ENCODE measurements at regions of chr12 and their contacts with region 1.

Region 1: DNA sequence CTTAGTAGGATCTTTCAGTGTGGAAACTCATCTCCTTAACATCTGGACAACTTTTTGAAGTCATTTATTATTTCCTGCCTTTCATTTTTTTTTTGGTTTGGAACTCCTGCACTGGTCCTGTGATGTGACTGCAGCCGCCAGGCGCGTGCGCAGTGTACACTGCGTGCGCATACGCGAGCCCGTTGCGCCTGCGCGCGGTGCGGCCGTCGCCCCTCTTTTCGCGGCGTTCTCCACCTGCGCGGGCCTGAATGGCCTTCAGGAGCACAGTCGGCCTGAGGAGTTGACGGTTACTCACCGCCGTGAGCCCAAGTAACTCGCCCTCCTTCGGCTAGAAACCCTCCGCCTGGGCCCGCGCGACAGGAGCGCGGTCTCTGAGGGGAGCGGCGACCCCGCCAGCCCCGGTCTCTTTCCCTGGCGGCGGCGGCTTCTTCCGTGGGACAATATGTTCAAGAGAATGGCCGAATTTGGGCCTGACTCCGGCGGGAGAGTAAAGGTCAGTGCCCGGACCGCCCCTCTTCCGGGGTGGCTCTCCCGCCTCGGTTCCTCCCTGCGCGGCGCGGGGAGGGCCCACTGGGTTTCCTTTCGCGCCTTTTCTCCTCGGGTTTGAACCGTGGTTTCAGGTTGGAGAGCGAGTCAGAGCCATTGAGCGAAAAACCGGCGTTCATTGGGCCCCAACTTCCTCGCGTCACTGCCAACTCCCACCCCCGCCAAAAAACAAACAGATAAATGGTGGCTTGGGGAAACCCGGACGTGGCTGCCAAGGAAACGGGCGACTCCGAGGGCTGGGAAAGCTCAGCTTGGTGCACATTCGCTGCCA is at the start of gene YEATS4:
- DNase-seq: peak; percentile 59 to 93 (median 83)
- ATAC-seq: peak; percentile 85 to 90 (median 90)
- H3K4me3 ChIP-seq: peak within 1 kb of the TSS; percentile 64 to 97
- H3K4me3 Mint-ChIP-seq: peak within 1 kb of the TSS; percentile 82 to 89 (median 88)
- H3K27ac ChIP-seq: peak within 1 kb of the TSS; percentile 99
- H3K27ac Mint-ChIP-seq: peak within 1 kb of the TSS; percentile 82 to 87
- H3K4me1 ChIP-seq: peaks cover 8 to 25% of the 10 kb centered on the region in 2 experiments
- H3K4me1 Mint-ChIP-seq: peaks cover 26 to 38% (median 27%) of the 10 kb centered on the region in 3 donors
- H3K27me3 ChIP-seq: no peaks in the 10 kb centered on the region
- H3K27me3 Mint-ChIP-seq: peaks cover under 1% of the 10 kb centered on the region in 2 donors
- total RNA-seq, gene YEATS4: 16.3 to 29.6 (median 21.5) TPM

Region 2: DNA sequence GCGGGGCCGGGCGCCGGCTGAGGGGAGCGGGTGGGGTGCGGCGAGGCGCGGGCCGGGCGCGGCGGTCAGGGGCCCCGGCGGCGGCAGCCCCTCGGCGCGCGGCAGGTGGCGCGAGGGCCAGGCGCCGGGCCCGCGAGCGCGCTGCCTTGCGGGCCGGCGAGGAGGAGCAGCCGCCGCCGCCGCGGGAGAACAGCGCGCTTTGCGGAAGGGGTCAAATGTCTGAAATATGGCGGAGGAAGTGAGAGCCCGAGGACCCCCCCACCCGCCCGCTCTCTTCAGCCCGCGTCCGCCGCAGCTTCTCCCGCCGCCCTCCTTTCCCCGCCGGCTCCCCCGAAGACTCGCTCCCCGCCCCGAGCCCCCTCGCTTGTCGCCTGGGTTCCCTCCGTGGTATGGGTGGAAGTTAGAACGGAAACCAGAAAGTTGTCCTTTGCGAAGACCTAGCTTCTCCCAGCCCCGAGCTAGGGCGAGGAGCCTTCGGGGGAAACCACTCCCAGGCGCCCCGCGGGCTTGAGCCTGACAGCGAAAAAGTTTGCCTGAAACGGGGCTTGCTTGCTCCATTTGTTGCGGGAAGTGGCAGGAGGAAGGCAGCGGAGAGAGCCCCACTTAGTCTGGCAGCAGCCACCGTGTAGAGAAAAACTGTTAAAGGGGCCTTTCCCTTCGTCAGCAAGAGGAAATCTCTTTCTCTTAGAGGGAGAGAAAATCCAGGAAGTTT is 748.5 kb before region 1 on chr12:
- CTCF ChIA-PET with region 1: interaction called in 1 of 2 experiments, 12 read pairs
- POLR2A ChIA-PET with region 1: no interaction called
- DNase-seq: peak in 34 of 35 experiments; percentile 18 to 66 (median 34)
- ATAC-seq: peak; percentile 15 to 50 (median 42)
- H3K4me3 ChIP-seq: peak overlapping the region; percentile 97 to 99
- H3K4me3 Mint-ChIP-seq: peak overlapping the region; percentile 94 to 100 (median 96)
- H3K27ac ChIP-seq: peak overlapping the region; percentile 92
- H3K27ac Mint-ChIP-seq: peak overlapping the region; percentile 95 to 97
- H3K4me1 ChIP-seq: peaks cover 19 to 27% of the 10 kb centered on the region in 2 experiments
- H3K4me1 Mint-ChIP-seq: peaks cover 43 to 58% (median 49%) of the 10 kb centered on the region in 3 donors
- H3K27me3 ChIP-seq: no peaks in the 10 kb centered on the region
- H3K27me3 Mint-ChIP-seq: no peaks in the 10 kb centered on the region

Region 3: GRCh38 chr12:69342421-69342820 is 17.3 kb before region 1 on chr12:
- CTCF ChIA-PET with region 1: interaction called, 3 to 12 read pairs
- POLR2A ChIA-PET with region 1: no interaction called
- DNase-seq: no peak
- ATAC-seq: no peak
- H3K4me3 ChIP-seq: no peak overlapping the region
- H3K4me3 Mint-ChIP-seq: no peak overlapping the region
- H3K27ac ChIP-seq: no peak overlapping the region
- H3K27ac Mint-ChIP-seq: no peak overlapping the region
- H3K4me1 ChIP-seq: no peaks in the 10 kb centered on the region
- H3K4me1 Mint-ChIP-seq: peaks cover 0 to 5% (median 0%) of the 10 kb centered on the region in 3 donors
- H3K27me3 ChIP-seq: peaks cover 0 to 12% of the 10 kb centered on the region in 2 experiments
- H3K27me3 Mint-ChIP-seq: peaks cover 0 to 3% of the 10 kb centered on the region in 2 donors

Region 4: DNA sequence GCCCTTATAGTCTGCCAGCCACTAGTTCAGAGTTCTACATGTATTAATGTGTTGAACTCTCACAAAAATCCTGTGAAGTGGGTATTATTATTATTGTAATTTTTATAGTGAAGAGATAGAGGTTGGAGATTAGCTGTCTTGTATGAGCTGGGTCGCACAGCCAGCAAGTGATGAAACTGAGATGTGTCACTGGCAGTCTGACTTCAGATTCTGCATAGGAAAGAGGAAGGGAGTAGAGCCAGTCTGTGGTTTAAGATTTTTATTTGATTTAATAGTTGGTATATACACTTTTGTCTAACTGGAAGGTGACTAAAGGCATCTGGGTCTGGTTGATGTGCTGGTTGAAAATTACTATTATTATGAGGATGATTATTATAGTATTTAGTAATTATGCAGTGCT is 104.7 kb after region 1 on chr12:
- CTCF ChIA-PET with region 1: no interaction called
- POLR2A ChIA-PET with region 1: no interaction called
- DNase-seq: no peak
- ATAC-seq: no peak
- H3K4me3 ChIP-seq: no peak overlapping the region
- H3K4me3 Mint-ChIP-seq: no peak overlapping the region
- H3K27ac ChIP-seq: no peak overlapping the region
- H3K27ac Mint-ChIP-seq: no peak overlapping the region
- H3K4me1 ChIP-seq: no peaks in the 10 kb centered on the region
- H3K4me1 Mint-ChIP-seq: peaks cover 0 to 7% (median 1%) of the 10 kb centered on the region in 3 donors
- H3K27me3 ChIP-seq: no peaks in the 10 kb centered on the region
- H3K27me3 Mint-ChIP-seq: peaks cover 0 to 9% of the 10 kb centered on the region in 2 donors

Region 5: GRCh38 chr12:69570545-69571399 is 211.0 kb after region 1 on chr12:
- CTCF ChIA-PET with region 1: interaction called, 80 to 94 read pairs
- POLR2A ChIA-PET with region 1: interaction called, 3 to 8 read pairs
- DNase-seq: peak in 33 of 35 experiments; percentile 6 to 86 (median 44)
- ATAC-seq: peak; percentile 54 to 87 (median 56)
- H3K4me3 ChIP-seq: no peak overlapping the region
- H3K4me3 Mint-ChIP-seq: no peak overlapping the region
- H3K27ac ChIP-seq: peak overlapping the region; percentile 54
- H3K27ac Mint-ChIP-seq: peak overlapping the region in 1 of 2 donors; percentile 31
- H3K4me1 ChIP-seq: no peaks in the 10 kb centered on the region
- H3K4me1 Mint-ChIP-seq: peaks cover 0 to 6% (median 4%) of the 10 kb centered on the region in 3 donors
- H3K27me3 ChIP-seq: no peaks in the 10 kb centered on the region
- H3K27me3 Mint-ChIP-seq: no peaks in the 10 kb centered on the region

Region 6: DNA sequence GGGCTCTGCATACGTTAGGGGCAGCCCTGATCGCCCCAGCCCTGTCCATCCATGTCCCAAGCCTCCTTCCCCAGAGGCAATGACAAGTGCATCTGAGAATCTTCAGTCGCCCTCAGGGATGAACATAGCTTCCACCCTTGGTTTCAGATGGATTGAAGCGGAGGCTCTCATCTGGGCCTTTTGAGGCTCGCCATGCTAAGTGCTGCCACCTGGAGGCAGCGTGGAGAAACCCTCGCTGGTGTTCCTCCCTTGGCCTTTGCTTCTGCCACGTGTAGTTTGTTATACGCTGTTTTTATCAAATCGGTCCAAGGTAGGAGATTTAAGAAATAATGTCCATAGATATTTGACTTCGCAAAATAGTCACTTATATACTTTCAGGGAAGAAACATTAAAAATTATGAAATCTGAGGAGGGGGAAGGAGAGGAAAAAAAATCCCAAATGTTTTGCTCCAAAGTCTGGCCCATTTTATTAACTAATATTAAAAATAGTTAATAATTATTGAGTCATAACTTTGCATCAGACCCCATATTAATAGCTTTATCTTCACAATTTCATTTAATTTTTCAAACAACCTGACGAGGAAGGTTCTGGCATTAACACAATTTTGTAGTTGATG is 279.8 kb after region 1 on chr12:
- CTCF ChIA-PET with region 1: interaction called, 20 to 24 read pairs
- POLR2A ChIA-PET with region 1: interaction called in 1 of 2 experiments, 5 read pairs
- DNase-seq: peak; percentile 7 to 73 (median 44)
- ATAC-seq: peak; percentile 63 to 71 (median 66)
- H3K4me3 ChIP-seq: no peak overlapping the region
- H3K4me3 Mint-ChIP-seq: no peak overlapping the region
- H3K27ac ChIP-seq: no peak overlapping the region
- H3K27ac Mint-ChIP-seq: no peak overlapping the region
- H3K4me1 ChIP-seq: no peaks in the 10 kb centered on the region
- H3K4me1 Mint-ChIP-seq: peaks cover 0 to 2% (median 2%) of the 10 kb centered on the region in 3 donors
- H3K27me3 ChIP-seq: peaks cover 0 to 3% of the 10 kb centered on the region in 2 experiments
- H3K27me3 Mint-ChIP-seq: peaks cover 0 to 2% of the 10 kb centered on the region in 2 donors

Region 7: DNA sequence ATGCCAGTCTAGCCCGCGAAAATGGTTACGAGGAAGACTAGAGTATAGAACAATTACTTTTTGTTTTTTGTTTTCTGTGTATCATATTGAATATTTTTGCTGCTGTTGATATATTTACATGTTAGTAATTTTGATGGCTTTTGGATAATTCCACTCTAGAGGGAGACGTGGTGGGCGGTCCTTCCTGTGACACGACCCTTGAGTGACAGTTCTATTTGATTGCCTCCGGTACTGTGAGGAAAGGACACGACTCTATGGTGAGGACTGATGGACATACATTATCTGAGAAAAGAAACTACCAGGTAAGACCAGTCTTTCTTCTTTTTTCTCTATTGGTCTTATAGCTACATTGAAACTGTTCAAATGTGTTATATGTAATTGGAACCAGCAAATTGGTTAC is 918.2 kb after region 1 on chr12:
- CTCF ChIA-PET with region 1: interaction called in 1 of 2 experiments, 10 read pairs
- POLR2A ChIA-PET with region 1: no interaction called
- DNase-seq: no peak
- ATAC-seq: no peak
- H3K4me3 ChIP-seq: no peak overlapping the region
- H3K4me3 Mint-ChIP-seq: peak overlapping the region in 1 of 3 donors; percentile 10
- H3K27ac ChIP-seq: no peak overlapping the region
- H3K27ac Mint-ChIP-seq: no peak overlapping the region
- H3K4me1 ChIP-seq: no peaks in the 10 kb centered on the region
- H3K4me1 Mint-ChIP-seq: peaks cover 62 to 81% (median 69%) of the 10 kb centered on the region in 3 donors
- H3K27me3 ChIP-seq: no peaks in the 10 kb centered on the region
- H3K27me3 Mint-ChIP-seq: no peaks in the 10 kb centered on the region

Measured in T-cell (primary cell).